ENCODE measurements at regions of chr5 and their contacts with region 1.

Region 1: DNA sequence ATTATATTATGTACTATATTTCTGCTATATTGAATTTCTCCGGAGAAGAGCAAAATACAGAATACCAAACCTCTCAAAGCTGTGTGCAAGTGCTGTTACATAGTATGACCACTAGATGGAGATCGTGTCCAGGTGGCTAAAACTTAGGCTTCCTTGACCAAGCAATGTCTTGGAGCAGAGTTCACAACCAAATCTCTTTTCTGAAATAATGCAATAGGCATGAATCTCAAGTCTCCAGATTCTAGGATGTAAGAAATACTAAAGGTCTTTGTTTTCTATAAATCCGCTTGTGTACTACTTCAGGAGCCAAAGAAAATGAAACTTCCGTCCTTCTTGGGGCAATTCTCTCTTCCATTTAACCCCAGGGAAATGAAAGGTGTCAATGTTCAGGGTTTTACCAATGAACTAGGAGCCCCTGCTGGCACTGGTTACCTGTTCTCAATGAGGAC is 181.5 kb upstream of the RAI14 start:
- DNase-seq: peak; percentile 64
- H3K4me3 ChIP-seq: no peak overlapping the region
- H3K27ac ChIP-seq: no peak overlapping the region
- H3K4me1 ChIP-seq: no peaks in the 10 kb centered on the region
- H3K27me3 ChIP-seq: peaks cover 3 to 8% of the 10 kb centered on the region in 2 experiments
- CTCF ChIP-seq: peak; percentile 78 to 82
- POLR2A ChIP-seq: no peak

Region 2: DNA sequence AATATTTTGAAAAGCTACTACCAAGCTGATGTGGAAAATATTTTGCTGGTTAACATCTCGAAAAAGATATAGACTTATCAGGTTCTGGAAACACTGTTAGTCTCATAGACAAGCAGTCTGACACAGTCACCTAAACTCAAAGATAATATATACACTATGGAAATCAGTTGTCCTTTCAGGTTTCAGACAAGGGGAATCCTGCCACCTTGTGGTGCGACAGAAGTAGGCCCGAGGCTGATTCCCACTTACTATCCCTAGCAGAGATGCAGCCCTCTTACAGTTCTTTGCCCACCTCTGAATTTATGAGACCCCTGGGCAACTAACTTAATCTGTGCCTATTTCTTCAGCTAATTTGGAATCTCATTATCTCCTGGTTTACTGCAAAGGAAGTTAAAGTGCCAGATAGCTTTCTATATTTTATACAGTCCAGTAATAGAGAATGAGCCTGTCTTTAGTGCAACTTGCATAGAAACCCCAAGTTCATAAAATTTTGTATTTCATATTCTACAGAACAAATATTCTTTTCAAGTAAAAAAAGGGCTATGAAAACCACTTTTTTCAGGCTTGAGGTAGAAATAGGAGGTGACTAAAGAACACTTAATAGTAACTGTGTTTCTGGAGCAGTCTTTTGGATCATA is 423.8 kb after region 1 on chr5:
- CTCF ChIA-PET with region 1: interaction called, 82 read pairs
- POLR2A ChIA-PET with region 1: no interaction called
- dilution Hi-C with region 1: loop called (anchors 25 kb)
- intact Hi-C with region 1: loop called (anchors 1 kb)
- DNase-seq: peak; percentile 74
- H3K4me3 ChIP-seq: no peak overlapping the region
- H3K27ac ChIP-seq: no peak overlapping the region
- H3K4me1 ChIP-seq: no peaks in the 10 kb centered on the region
- H3K27me3 ChIP-seq: no peaks in the 10 kb centered on the region
- CTCF ChIP-seq: peak; percentile 83 to 84
- POLR2A ChIP-seq: no peak

Region 3: GRCh38 chr5:34905564-34905963 is 431.0 kb after region 1 on chr5:
- CTCF ChIA-PET with region 1: interaction called, 48 read pairs
- POLR2A ChIA-PET with region 1: no interaction called
- dilution Hi-C with region 1: loop called (anchors 25 kb)
- intact Hi-C with region 1: no loop called
- DNase-seq: peak; percentile 26
- H3K4me3 ChIP-seq: no peak overlapping the region
- H3K27ac ChIP-seq: no peak overlapping the region
- H3K4me1 ChIP-seq: no peaks in the 10 kb centered on the region
- H3K27me3 ChIP-seq: no peaks in the 10 kb centered on the region
- CTCF ChIP-seq: peak; percentile 22 to 34
- POLR2A ChIP-seq: no peak

Region 4: DNA sequence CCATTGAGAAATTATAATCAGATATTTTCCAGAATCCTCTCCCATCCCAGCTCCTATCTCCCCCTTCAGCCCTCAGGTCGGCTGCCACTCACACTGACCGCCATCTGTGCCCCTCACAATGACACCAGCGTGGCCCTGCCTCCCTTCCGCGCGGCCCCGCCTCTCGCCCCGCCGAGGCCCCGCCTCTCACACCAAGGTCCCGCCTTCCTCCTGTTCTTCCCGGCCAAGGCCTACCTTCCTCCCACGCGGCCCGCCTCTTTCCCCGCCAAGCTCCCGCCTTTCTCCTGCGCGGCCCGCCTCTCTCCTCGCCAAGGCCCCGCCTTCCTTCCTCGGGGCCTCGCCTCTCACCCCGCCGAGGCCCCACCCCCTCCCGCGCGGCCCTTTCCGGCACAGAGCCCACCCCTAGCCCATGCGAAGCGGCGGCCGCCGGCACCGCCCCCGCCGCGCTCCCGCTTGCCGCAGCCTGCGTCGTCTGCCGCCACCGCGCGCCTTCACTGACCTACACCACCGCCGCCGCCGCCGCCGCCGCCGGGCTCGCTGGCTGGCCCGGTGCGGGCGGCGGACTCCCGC is 454.6 kb after region 1 on chr5 and contains the start of gene DNAJC21:
- CTCF ChIA-PET with region 1: interaction called, 15 read pairs
- POLR2A ChIA-PET with region 1: interaction called, 3 read pairs
- dilution Hi-C with region 1: loop called (anchors 25 kb)
- intact Hi-C with region 1: no loop called
- DNase-seq: peak; percentile 98
- H3K4me3 ChIP-seq: peak within 1 kb of the TSS; percentile 50 to 98 (median 97)
- H3K27ac ChIP-seq: peak within 1 kb of the TSS; percentile 39
- H3K4me1 ChIP-seq: peaks cover 20% of the 10 kb centered on the region
- H3K27me3 ChIP-seq: no peaks in the 10 kb centered on the region
- CTCF ChIP-seq: no peak
- POLR2A ChIP-seq: no peak
- total RNA-seq, gene DNAJC21: 39.4 and 49.2 TPM in 2 replicates

Region 5: DNA sequence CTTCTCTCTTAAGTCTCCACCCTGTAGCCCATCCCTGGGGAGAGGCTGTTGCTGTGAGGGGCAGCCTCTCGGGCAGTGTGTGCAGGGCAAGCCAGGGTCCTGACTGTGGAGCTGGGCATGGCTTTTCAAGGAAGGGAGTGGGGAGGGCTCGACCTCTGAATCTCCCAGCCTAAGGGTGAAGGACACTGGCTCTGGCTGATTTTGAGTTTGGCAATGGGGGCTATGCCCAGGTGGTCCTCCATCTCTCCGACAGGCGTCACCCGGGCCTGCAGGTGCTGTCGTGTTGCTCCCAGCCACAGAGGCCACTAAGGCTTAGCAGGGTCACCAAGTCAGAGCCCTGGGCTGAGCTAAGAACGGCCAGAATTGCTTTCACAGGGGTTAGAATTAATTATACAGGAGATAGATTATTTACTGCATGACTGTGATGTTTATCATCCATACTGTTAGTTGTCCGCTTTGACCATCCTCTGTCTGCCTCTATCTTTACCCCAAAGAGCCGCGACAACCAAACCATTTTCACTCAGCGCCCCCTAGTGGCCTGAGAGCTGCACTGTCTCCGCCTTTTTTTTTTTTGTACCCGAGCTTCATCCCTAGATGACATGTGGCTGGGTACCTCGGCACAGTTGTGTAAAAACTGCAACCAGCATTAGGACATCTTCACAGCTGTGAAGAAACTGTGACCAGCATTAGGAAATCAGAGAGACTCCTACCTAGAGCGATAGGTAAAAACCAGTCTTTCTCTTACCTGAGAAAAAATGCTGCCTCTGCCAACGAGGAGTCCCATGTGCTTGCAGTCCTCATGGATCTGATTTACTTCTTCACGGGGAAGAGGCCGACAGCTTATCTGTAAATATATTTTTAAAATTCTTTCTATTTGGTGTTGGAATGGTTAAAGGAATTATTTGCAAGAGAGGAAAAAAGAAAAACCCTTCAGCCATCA is 528.7 kb after region 1 on chr5:
- CTCF ChIA-PET with region 1: interaction called, 61 read pairs
- POLR2A ChIA-PET with region 1: no interaction called
- dilution Hi-C with region 1: no loop called
- intact Hi-C with region 1: loop called (anchors 1 kb)
- DNase-seq: peak; percentile 55
- H3K4me3 ChIP-seq: no peak overlapping the region
- H3K27ac ChIP-seq: no peak overlapping the region
- H3K4me1 ChIP-seq: no peaks in the 10 kb centered on the region
- H3K27me3 ChIP-seq: peaks cover 6 to 9% of the 10 kb centered on the region in 2 experiments
- CTCF ChIP-seq: peak; percentile 88 to 90
- POLR2A ChIP-seq: no peak